Sigmoid colon (tissue), 7 donors: ENCODE measurements at regions of chr6 and their contacts with region 1.

Region 1: GRCh38 chr6:116570856-116571682 is at the start of gene RWDD1:
- DNase-seq: peak; percentile 99
- H3K4me3 ChIP-seq: peak within 1 kb of the TSS; percentile 80 to 91 (median 84)
- H3K27ac ChIP-seq: peak within 1 kb of the TSS; percentile 89 to 95 (median 94)
- H3K4me1 ChIP-seq: peaks cover 0 to 34% (median 26%) of the 10 kb centered on the region in 4 donors
- H3K27me3 ChIP-seq: no peaks in the 10 kb centered on the region
- CTCF ChIP-seq: peak in 1 of 4 experiments; percentile 10
- EP300 ChIP-seq: no peak
- POLR2A ChIP-seq: peak; percentile 77 to 88
- total RNA-seq, gene RWDD1: 75.0 to 119 (median 89.1) TPM

Region 2: GRCh38 chr6:116279260-116280063 is 291.6 kb before region 1 on chr6 and contains the start of gene TSPYL1:
- intact Hi-C with region 1: loop called (anchors 5 kb)
- DNase-seq: peak; percentile 98
- H3K4me3 ChIP-seq: peak within 1 kb of the TSS; percentile 87 to 94 (median 92)
- H3K27ac ChIP-seq: peak within 1 kb of the TSS; percentile 98 to 100 (median 99)
- H3K4me1 ChIP-seq: peaks cover 0 to 55% (median 49%) of the 10 kb centered on the region in 4 donors
- H3K27me3 ChIP-seq: no peaks in the 10 kb centered on the region
- CTCF ChIP-seq: no peak
- EP300 ChIP-seq: no peak
- POLR2A ChIP-seq: peak; percentile 98
- total RNA-seq, gene TSPYL1: 52.8 to 79.6 (median 65.8) TPM

Region 3: DNA sequence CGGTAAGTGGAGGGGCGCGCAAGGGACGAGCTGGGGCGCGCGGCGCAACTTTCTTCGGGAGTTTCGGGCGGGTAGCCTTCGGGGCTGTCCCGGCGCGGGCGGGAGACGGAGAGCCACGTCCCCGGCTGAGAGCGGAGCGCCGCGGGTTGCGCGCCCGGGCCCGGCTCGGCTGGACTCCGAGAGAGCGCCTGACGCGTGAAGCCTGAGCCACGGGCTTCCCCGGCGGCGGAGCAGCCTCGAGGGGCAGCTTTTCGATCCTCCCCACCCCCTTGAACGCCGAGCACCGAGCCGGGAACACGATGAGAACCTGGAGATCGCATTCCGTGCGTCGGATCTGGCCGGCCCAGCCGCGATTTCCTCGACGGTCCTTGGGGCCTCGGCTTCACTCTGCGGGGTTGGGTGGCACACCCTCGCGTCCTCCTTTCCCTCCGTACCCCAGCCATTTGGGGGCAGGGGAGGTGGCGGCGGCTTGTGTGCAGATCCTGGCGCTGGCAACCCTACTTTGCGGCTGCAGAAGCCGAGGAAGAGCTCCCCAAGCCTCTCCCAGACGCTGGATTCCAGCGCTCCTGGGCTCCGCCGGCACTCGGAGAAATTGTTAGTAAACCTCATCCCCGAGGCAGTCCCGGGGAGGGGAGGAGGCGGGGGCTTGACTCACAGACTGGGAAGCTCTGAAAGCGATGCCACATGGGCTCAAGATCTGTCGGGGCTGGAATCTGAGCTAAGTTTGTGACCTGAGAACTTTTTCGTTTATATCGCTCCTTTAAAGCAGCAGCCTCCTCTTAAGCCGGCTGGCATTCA is 199.8 kb before region 1 on chr6:
- intact Hi-C with region 1: loop called (anchors 5 kb)
- DNase-seq: peak; percentile 92
- H3K4me3 ChIP-seq: peak overlapping the region; percentile 56 to 83 (median 76)
- H3K27ac ChIP-seq: peak overlapping the region; percentile 93 to 96 (median 95)
- H3K4me1 ChIP-seq: peaks cover 0 to 12% (median 6%) of the 10 kb centered on the region in 4 donors
- H3K27me3 ChIP-seq: no peaks in the 10 kb centered on the region
- CTCF ChIP-seq: no peak
- EP300 ChIP-seq: no peak
- POLR2A ChIP-seq: peak in 1 of 2 donors; percentile 39

Region 4: GRCh38 chr6:116615937-116616736 is 45.1 kb after region 1 on chr6 and contains the start of gene RSPH4A:
- intact Hi-C with region 1: loop called (anchors 5 kb)
- DNase-seq: peak; percentile 96
- H3K4me3 ChIP-seq: peak within 1 kb of the TSS; percentile 32 to 58 (median 51)
- H3K27ac ChIP-seq: peak within 1 kb of the TSS; percentile 34 to 59 (median 51)
- H3K4me1 ChIP-seq: peaks cover 0 to 14% (median 8%) of the 10 kb centered on the region in 4 donors
- H3K27me3 ChIP-seq: no peaks in the 10 kb centered on the region
- CTCF ChIP-seq: no peak
- EP300 ChIP-seq: no peak
- POLR2A ChIP-seq: no peak
- total RNA-seq, gene RSPH4A: under 0.01 to 1.1 (median 0.71) TPM

Region 5: GRCh38 chr6:116667623-116668022 is 96.6 kb after region 1 on chr6:
- intact Hi-C with region 1: loop called (anchors 5 kb)
- DNase-seq: no peak
- H3K4me3 ChIP-seq: peak overlapping the region; percentile 71 to 93 (median 84)
- H3K27ac ChIP-seq: peak overlapping the region in 1 of 4 donors; percentile 87
- H3K4me1 ChIP-seq: peaks cover 0 to 35% (median 22%) of the 10 kb centered on the region in 4 donors
- H3K27me3 ChIP-seq: no peaks in the 10 kb centered on the region
- CTCF ChIP-seq: no peak
- EP300 ChIP-seq: no peak
- POLR2A ChIP-seq: no peak